Activated CD4-positive, alpha-beta T cell treated with anti-CD3 and anti-CD28 coated beads for 36 hours (primary cell): ENCODE measurements at regions of chr13 and their contacts with region 1.

Region 1: DNA sequence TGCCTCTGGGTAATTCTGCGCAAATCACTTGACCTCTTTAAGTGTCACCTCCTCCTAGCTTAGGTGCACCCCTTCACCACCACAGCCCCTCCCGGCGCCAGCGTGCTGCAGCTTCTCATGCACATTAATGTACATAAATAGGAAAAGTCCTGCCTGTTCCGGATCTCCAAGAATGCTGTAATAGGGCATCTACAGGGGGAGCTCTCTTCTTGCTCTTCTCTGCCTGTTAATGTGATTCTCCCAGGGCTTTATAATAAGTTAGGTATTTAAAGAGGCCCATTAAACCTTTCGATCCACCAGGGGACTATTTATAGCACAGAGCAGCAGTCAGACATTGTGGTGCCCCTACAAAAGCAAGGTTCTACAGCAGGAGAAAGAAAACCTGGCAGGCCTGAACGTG is 35.3 kb downstream of the SOX1 start:
- DNase-seq: no peak
- ATAC-seq: no peak
- H3K4me3 Mint-ChIP-seq: no peak overlapping the region
- H3K27ac Mint-ChIP-seq: no peak overlapping the region
- H3K4me1 Mint-ChIP-seq: peaks cover 4% of the 10 kb centered on the region
- H3K27me3 Mint-ChIP-seq: peaks cover 50% of the 10 kb centered on the region

Region 2: GRCh38 chr13:112057736-112058518 is 44.3 kb before region 1 on chr13:
- CTCF ChIA-PET with region 1: no interaction called
- POLR2A ChIA-PET with region 1: no interaction called
- intact Hi-C with region 1: loop called (anchors 2 to 5 kb)
- DNase-seq: no peak
- ATAC-seq: no peak
- H3K4me3 Mint-ChIP-seq: no peak overlapping the region
- H3K27ac Mint-ChIP-seq: no peak overlapping the region
- H3K4me1 Mint-ChIP-seq: peaks cover 2% of the 10 kb centered on the region
- H3K27me3 Mint-ChIP-seq: peaks cover 70% of the 10 kb centered on the region

Region 3: DNA sequence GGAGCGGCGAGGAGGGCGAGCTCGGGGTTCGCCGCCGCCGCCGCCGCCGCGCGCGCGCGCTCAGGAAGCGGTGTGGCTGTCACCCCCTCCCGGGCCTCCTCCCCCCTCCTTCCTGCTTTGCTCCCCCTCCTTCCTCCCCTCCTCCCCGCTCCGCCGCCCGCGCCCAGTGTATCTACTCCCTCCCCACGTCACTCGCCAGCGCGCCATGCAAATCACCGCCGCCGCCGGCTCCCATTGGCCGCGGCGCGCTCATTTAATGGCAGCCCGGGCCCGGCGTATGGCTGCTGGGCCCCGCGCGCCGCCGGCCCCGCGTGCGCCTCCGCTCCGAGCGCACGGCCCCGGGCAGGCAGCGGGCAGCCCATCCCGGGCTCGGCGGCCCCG is 35.6 kb before region 1 on chr13:
- CTCF ChIA-PET with region 1: interaction called, 3 read pairs
- POLR2A ChIA-PET with region 1: no interaction called
- intact Hi-C with region 1: loop called (anchors 2 to 5 kb)
- DNase-seq: peak; percentile 87
- ATAC-seq: peak; percentile 85
- H3K4me3 Mint-ChIP-seq: no peak overlapping the region
- H3K27ac Mint-ChIP-seq: no peak overlapping the region
- H3K4me1 Mint-ChIP-seq: peaks cover 11% of the 10 kb centered on the region
- H3K27me3 Mint-ChIP-seq: peaks cover 63% of the 10 kb centered on the region

Region 4: DNA sequence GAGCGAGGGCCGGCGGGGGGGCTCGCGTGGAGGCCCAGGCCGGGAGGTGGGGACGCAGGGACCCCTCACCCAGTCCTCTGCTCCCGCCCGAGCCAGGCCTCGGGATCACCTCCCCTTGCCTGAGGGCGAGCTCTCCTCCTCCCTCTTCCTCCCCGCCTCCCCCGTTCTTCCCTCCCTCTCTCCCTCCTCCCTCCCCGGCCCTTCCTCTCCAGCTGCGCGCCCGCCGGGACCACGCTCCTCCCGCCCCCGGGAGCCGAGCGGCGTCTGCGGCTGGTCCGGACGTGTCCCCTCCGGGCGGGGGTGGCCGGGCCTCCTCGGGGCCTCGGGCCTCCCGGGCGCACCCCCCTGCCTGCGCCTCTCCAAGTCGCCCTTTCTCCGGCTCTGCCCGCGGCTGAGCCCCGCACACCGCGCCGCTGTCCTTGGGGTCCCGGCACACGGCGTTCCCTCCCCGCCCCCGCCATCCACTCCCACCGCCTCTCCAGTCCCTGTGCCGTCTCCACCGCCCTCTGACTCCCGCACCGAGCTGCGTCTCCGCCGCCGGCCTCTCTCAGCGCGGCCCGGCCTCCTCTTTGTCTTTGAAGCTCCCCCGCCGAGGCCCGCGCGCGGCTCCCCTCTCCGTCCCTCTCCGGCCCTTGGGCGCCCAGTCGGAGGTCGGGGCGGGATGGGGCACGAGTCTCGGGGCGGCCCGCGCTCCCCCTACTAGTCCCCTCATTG is 29.6 kb before region 1 on chr13:
- CTCF ChIA-PET with region 1: interaction called, 3 read pairs
- POLR2A ChIA-PET with region 1: no interaction called
- intact Hi-C with region 1: loop called in 1 of 2 experiments (anchors 2 kb)
- DNase-seq: no peak
- ATAC-seq: no peak
- H3K4me3 Mint-ChIP-seq: no peak overlapping the region
- H3K27ac Mint-ChIP-seq: no peak overlapping the region
- H3K4me1 Mint-ChIP-seq: peaks cover 8% of the 10 kb centered on the region
- H3K27me3 Mint-ChIP-seq: peaks cover 61% of the 10 kb centered on the region

Region 5: GRCh38 chr13:112177450-112178288 is 75.4 kb after region 1 on chr13:
- CTCF ChIA-PET with region 1: no interaction called
- POLR2A ChIA-PET with region 1: no interaction called
- intact Hi-C with region 1: no loop called
- DNase-seq: no peak
- ATAC-seq: no peak
- H3K4me3 Mint-ChIP-seq: no peak overlapping the region
- H3K27ac Mint-ChIP-seq: no peak overlapping the region
- H3K4me1 Mint-ChIP-seq: no peaks in the 10 kb centered on the region
- H3K27me3 Mint-ChIP-seq: no peaks in the 10 kb centered on the region